Activated CD4-positive, alpha-beta memory T cell treated with anti-CD3 and anti-CD28 coated beads for 36 hours (primary cell): ENCODE measurements at regions of chr5 and their contacts with region 1.

Region 1: DNA sequence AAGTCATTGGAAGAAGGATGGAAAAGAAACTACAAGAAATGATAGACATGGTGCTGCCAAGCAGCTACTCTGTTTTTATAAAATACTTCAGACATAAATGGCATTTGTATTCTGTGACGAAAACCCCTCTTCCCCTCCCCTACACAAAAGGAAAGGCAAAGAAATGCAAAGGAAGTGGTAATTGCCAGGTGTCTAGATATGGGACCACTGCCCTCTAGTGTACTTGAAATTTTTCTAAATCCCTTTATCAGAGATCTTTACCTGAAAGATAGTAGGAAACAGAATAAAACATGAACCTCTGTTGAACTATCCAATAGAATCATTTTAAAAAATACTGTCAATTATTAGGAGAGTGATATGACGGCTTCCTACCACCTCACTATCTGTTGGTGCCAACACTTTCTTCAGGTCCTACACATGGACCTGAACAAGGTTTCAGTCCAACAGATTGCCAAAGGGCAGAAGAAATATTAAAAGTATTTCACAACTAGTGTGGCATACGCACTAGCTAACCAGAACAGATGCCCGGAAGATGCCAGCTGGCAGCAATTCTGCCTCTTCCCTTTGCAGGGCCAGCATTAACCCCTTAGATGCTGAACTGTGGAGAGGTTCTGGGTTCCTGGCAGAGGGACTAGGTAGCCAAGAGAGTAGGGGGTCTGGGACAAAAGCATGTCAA is 104.1 kb downstream of the TSSK1B start:
- DNase-seq: no peak
- H3K4me3 Mint-ChIP-seq: no peak overlapping the region
- H3K27ac Mint-ChIP-seq: no peak overlapping the region
- H3K4me1 Mint-ChIP-seq: peaks cover 13% of the 10 kb centered on the region
- H3K27me3 Mint-ChIP-seq: no peaks in the 10 kb centered on the region

Region 2: DNA sequence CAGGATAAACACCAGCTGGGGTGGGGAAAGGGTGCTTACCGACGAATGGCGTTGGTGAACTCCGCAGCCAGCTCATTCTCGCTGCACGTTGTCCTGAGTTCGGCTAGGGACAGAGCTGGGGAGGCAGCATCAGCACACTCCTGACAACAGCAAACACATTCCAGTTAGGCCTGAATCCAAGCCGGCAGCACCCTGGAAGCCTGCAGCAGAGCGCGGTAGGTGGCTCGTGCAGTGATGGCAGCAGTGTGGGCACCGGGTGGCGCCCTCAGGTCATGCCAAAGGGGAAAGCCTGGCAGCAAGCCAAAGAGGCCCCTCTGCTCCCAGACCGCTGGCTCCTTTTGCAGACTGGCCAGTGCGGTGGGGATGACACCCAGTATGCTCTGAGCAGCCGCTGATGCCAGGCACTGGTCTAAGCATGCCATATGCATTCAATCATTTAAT is 287.2 kb before region 1 on chr5:
- CTCF ChIA-PET with region 1: interaction called, 3 read pairs
- POLR2A ChIA-PET with region 1: no interaction called
- intact Hi-C with region 1: loop called (anchors 1 kb)
- DNase-seq: peak; percentile 47
- H3K4me3 Mint-ChIP-seq: no peak overlapping the region
- H3K27ac Mint-ChIP-seq: no peak overlapping the region
- H3K4me1 Mint-ChIP-seq: no peaks in the 10 kb centered on the region
- H3K27me3 Mint-ChIP-seq: no peaks in the 10 kb centered on the region

Region 3: DNA sequence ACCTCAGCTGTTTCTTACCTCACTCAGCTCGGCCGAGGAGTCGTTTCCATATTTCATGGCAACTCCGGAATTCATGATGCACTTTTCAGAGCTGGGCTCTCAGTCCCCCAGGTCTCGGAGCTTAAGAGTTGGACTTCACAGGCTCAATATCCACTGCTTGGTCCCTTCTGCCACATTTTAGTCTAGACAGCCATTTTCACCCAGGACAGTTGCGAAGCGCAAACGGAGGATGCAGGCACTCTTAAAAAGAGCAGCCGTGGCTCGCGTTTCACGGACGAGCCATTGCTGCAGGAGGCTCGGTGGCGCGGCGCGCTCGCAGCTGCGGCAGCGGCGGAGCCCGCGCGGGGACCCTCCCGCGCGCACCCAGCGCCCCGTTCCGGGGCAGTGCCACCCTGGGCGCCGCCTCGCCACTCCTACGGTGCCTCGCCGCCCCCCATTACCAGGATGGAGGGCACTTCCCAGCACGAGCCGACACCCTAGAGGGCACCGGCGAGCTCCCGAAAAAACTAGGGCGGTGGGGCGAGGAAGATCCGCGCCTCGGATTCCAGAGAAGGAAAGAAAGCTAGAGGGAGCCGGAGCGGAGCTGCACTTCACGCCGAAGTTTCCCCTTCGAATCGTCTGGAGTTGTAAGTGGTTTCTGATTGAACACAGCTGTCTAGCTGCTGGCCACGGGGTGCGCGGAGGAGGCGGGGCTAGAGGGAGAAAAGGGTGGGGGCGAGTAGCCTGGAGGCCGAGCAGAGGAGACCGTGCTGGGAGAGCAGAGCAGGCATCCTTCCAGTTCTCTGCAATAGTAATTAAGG is 36.2 kb before region 1 on chr5:
- CTCF ChIA-PET with region 1: interaction called, 8 read pairs
- POLR2A ChIA-PET with region 1: no interaction called
- intact Hi-C with region 1: loop called (anchors 2 kb)
- DNase-seq: peak; percentile 88
- H3K4me3 Mint-ChIP-seq: peak overlapping the region; percentile 89
- H3K27ac Mint-ChIP-seq: peak overlapping the region; percentile 55
- H3K4me1 Mint-ChIP-seq: peaks cover 16% of the 10 kb centered on the region
- H3K27me3 Mint-ChIP-seq: peaks cover 13% of the 10 kb centered on the region

Region 4: DNA sequence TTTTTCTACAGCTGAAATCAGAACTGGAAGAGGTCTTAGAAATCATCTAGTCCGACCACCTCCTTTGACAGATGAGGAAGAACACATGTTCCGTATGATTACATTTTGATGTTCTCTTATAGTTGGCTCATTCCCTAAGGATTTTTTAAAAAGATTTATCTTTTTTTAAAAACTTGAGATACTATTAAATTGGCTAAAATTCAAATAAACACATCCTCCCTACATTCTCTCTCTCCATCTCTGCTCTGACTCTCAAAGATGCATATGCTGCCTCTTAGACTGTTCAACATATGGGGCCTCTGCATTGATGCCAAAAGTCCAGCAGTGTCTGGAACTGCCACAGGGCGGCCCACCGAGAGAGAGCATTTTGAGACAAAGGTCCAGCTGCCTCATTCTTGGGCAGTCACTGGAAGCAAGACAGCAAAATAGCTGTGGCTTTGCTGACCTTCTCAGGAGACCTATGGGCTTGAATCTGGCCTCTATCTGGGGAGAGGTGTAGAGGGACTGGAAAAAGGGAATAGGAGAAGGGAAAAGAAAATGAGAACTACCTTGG is 116.9 kb after region 1 on chr5:
- CTCF ChIA-PET with region 1: no interaction called
- POLR2A ChIA-PET with region 1: no interaction called
- intact Hi-C with region 1: no loop called
- DNase-seq: no peak
- H3K4me3 Mint-ChIP-seq: no peak overlapping the region
- H3K27ac Mint-ChIP-seq: no peak overlapping the region
- H3K4me1 Mint-ChIP-seq: peaks cover 4% of the 10 kb centered on the region
- H3K27me3 Mint-ChIP-seq: peaks cover 11% of the 10 kb centered on the region

Region 5: GRCh38 chr5:113606298-113607134 is 275.8 kb after region 1 on chr5:
- CTCF ChIA-PET with region 1: interaction called, 6 read pairs
- POLR2A ChIA-PET with region 1: no interaction called
- intact Hi-C with region 1: loop called (anchors 1 kb)
- DNase-seq: peak; percentile 44
- H3K4me3 Mint-ChIP-seq: no peak overlapping the region
- H3K27ac Mint-ChIP-seq: no peak overlapping the region
- H3K4me1 Mint-ChIP-seq: peaks cover 3% of the 10 kb centered on the region
- H3K27me3 Mint-ChIP-seq: peaks cover 12% of the 10 kb centered on the region